ENCODE measurements at regions of chr17 and their contacts with region 1.

Region 1: GRCh38 chr17:57747221-57748017 is 2.3 kb upstream of the CCDC182 start:
- DNase-seq: peak; percentile 74
- H3K4me3 ChIP-seq: no peak overlapping the region
- H3K27ac ChIP-seq: no peak overlapping the region
- H3K4me1 ChIP-seq: no peaks in the 10 kb centered on the region
- H3K27me3 ChIP-seq: peaks cover 6 to 20% of the 10 kb centered on the region in 2 experiments
- CTCF ChIP-seq: peak; percentile 68 to 73
- POLR2A ChIP-seq: no peak

Region 2: DNA sequence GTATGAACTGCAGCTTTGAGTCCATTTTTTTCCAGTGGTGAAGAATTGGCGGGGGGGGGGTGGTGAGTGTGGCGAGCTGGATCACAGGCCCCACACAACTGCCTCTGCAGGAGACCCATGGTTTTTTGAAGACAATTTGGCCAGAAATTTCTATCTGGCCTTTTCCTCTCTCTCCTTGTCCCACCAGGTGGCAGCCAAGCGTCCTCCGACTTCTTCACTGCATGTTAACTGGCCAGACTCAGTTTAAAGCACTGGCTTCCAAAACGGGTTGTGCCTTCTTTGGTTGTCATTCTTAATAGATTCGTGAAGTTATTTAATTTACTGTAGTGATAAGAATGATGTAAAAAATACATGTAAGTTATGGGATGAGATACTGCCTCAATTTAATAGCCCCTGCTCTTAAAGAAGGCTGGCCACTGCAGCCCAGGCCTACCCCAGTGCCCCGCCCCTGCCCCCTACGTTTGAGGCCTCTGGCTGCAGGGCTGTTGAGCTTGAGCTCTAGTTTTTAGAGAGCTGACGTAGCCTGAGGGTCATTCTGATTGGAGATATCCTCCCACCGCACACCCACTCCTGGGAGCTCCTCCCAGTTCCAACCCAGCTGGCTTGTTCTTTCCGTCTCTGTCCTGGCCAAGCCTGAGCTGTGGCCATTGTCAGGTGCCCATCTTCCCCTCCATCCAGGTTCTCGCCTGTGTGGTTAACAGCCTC is 625.9 kb before region 1 on chr17:
- CTCF ChIA-PET with region 1: interaction called, 14 read pairs
- POLR2A ChIA-PET with region 1: no interaction called
- dilution Hi-C with region 1: no loop called
- intact Hi-C with region 1: no loop called
- DNase-seq: peak; percentile 29
- H3K4me3 ChIP-seq: no peak overlapping the region
- H3K27ac ChIP-seq: no peak overlapping the region
- H3K4me1 ChIP-seq: no peaks in the 10 kb centered on the region
- H3K27me3 ChIP-seq: no peaks in the 10 kb centered on the region
- CTCF ChIP-seq: peak; percentile 29 to 64
- POLR2A ChIP-seq: no peak

Region 3: GRCh38 chr17:57130761-57131461 is 616.5 kb before region 1 on chr17:
- CTCF ChIA-PET with region 1: interaction called, 42 read pairs
- POLR2A ChIA-PET with region 1: no interaction called
- dilution Hi-C with region 1: no loop called
- intact Hi-C with region 1: loop called (anchors 1 kb)
- DNase-seq: peak; percentile 57
- H3K4me3 ChIP-seq: no peak overlapping the region
- H3K27ac ChIP-seq: no peak overlapping the region
- H3K4me1 ChIP-seq: no peaks in the 10 kb centered on the region
- H3K27me3 ChIP-seq: no peaks in the 10 kb centered on the region
- CTCF ChIP-seq: peak; percentile 46 to 85
- POLR2A ChIP-seq: no peak

Region 4: DNA sequence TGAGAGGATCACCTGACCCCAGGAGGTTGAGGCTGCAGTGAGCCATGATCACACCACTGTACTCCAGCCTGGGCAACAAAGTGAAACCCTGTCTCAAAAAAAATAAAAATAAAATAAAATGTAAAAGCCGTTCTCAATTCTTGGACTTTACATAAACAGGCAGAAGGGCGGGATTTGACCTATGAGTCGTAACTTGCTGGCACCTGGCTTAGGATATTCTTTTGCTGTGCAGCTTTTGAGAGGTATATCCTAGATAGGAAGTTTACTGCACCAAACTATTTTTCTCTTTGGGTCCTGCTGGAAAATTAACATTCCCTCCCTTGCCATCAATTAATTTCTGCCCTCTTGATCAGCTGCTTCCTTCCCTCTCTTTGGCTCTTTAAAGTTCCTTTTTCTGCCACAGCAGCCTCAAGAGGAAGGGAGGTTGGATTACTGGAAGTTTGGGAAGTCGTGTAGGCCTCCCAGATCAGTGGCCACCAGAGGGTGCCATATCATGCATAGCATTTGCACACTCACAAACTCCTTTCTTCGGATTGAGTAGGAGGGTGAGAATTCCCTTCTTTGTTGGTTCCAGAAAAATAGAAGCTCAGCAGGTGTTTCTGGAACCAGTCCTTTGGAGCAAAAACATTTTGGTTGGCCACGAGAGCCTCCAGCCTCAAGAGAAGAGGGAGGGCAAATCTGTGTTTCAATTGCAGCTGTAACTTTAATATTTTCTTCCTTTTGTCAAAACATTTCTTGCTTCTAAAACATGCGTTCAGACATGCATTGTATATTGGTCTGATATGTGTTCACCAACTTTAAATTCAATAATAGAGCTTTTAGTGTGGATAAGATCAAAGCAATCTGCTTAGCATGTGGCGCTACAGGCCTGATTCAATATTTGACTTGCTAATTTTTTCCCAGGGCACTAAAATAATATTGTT is 149.6 kb before region 1 on chr17:
- CTCF ChIA-PET with region 1: interaction called, 15 read pairs
- POLR2A ChIA-PET with region 1: no interaction called
- dilution Hi-C with region 1: no loop called
- intact Hi-C with region 1: loop called (anchors 1 kb)
- DNase-seq: peak; percentile 67
- H3K4me3 ChIP-seq: no peak overlapping the region
- H3K27ac ChIP-seq: no peak overlapping the region
- H3K4me1 ChIP-seq: no peaks in the 10 kb centered on the region
- H3K27me3 ChIP-seq: peaks cover 7 to 9% of the 10 kb centered on the region in 2 experiments
- CTCF ChIP-seq: peak; percentile 78 to 79
- POLR2A ChIP-seq: no peak

Region 5: DNA sequence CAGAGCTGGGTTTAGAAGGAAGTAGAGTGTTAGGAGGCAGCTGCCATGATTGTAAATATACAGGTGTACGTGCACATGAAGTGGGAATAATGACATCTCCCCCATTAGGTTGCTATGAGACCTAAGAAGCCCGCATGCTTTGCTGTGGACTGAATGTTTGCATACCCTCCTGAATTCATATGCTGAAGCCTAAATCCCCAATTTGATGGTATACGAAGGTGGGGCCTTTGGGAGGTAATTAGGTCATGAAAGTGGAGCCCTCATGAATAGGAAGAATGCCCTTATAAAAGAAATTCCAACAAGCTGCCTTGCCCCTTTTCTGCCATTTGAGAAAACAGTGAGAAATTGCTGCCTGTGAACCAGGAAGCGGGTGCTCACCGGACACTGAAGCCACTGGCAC is 46.3 kb before region 1 on chr17:
- CTCF ChIA-PET with region 1: no interaction called
- POLR2A ChIA-PET with region 1: no interaction called
- dilution Hi-C with region 1: no loop called
- intact Hi-C with region 1: no loop called
- DNase-seq: no peak
- H3K4me3 ChIP-seq: no peak overlapping the region
- H3K27ac ChIP-seq: no peak overlapping the region
- H3K4me1 ChIP-seq: no peaks in the 10 kb centered on the region
- H3K27me3 ChIP-seq: peaks cover 0 to 3% of the 10 kb centered on the region in 2 experiments
- CTCF ChIP-seq: no peak
- POLR2A ChIP-seq: no peak

Region 6: DNA sequence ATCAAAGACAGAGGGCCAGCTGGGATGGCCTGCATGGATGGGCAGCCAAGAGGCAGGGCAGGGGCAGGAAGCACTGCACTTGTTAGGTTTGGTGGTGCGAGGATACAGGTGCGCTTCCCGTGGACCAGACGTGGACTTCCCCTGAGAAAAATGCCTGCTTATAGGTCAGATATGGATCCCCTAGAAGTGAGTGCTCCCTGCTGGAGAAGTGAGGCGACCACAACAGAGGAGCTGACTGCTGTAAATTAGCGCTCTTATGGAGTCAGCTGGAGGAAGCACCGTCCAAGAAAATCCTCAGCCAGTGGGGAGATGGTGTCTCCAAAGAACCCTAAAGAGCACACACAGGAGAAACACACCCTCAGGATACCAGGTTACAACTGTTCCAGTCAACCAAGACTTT is 25.4 kb after region 1 on chr17:
- CTCF ChIA-PET with region 1: interaction called, 26 read pairs
- POLR2A ChIA-PET with region 1: no interaction called
- dilution Hi-C with region 1: no loop called
- intact Hi-C with region 1: no loop called
- DNase-seq: no peak
- H3K4me3 ChIP-seq: no peak overlapping the region
- H3K27ac ChIP-seq: no peak overlapping the region
- H3K4me1 ChIP-seq: peaks cover 19% of the 10 kb centered on the region
- H3K27me3 ChIP-seq: peaks cover 13 to 17% of the 10 kb centered on the region in 2 experiments
- CTCF ChIP-seq: no peak
- POLR2A ChIP-seq: no peak

Measured in endothelial cell of umbilical vein (primary cell).